OCI-LY7 (cell line): ENCODE measurements at regions of chr14 and their contacts with region 1.

Region 1: DNA sequence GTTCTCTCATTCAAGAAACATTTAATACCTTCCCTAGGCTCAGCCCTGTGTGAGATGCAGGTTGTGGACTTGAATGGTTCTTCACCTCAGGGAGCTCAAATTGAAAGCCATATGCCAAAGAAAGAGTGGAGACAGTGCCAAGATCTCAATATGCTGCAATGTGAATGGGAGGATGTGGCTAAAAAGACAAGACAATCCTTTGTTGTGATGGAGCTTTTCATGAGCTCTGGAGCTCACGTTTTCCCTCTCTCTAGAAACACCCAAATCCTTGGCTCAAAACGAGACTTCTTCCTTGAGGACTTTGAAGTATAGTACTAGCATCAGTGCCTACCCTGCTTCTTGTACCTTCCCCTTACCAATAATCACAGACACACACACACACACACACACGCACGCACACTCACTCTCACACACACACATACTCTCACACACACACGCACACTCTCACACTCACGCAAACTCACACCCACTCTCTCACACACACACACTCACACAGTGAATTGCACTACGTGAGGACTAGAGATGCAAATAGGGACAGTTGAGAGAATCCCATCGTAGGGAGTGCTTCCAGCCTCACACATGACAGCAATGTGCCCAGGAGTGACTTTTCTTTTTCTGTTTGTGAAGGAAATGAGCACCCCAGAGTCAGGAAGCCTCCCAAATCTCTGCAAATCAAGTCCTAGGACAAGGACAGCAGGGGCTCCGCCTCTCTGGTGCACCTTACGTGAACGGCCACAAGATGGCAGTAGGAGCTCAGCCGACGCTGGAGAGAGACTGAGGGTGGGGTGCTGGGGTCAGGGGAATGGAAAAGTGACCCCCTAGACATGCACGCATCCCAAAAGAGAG is 231.4 kb downstream of the PCNX1 start:
- DNase-seq: peak; percentile 77
- H3K4me3 ChIP-seq: no peak overlapping the region
- H3K27ac ChIP-seq: no peak overlapping the region
- H3K4me1 ChIP-seq: peaks cover 31% of the 10 kb centered on the region
- CTCF ChIP-seq: peak; percentile 96

Region 2: GRCh38 chr14:71078500-71078899 is 60.2 kb before region 1 on chr14:
- CTCF ChIA-PET with region 1: no interaction called
- POLR2A ChIA-PET with region 1: no interaction called
- intact Hi-C with region 1: no loop called
- DNase-seq: no peak
- H3K4me3 ChIP-seq: no peak overlapping the region
- H3K27ac ChIP-seq: no peak overlapping the region
- H3K4me1 ChIP-seq: no peaks in the 10 kb centered on the region
- CTCF ChIP-seq: no peak

Region 3: DNA sequence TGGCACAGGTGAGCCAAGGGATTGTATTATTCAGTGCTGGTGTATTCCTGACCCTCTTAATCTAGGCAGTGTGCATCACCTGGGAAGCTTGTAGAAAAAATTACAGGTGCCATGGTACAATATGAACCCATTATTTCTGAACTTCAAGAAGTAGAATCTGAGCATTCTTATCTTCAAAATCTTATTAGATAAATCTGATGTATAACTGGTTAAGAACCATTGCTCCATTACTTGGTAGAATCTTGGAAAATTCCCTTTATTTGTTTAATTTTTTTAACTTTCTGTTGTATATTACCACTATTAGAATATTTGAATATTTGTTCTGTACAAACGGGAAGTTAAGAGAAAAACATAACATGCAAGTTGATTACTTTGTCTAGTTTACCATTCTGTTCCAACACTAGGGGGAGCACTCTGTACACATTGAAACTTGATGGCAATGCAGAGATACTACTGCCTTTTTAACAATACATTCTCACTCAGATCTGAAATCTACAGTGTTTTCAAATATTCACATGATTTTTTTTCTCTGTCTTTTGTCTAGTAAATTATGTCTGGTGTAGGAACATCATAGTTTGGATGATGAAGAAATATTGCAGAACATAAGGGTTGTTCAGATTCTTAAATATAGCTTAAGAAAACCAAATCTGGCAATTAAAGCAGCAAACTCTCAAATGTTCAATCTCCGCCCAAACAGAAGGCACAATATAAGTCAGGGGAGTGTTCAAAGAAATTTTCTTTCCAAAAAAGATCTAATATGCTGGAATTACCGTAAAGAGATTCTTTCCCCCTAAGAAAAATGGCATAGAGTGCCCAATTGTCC is 34.8 kb before region 1 on chr14:
- CTCF ChIA-PET with region 1: no interaction called
- POLR2A ChIA-PET with region 1: no interaction called
- intact Hi-C with region 1: loop called (anchors 1 kb)
- DNase-seq: peak; percentile 80
- H3K4me3 ChIP-seq: no peak overlapping the region
- H3K27ac ChIP-seq: no peak overlapping the region
- H3K4me1 ChIP-seq: no peaks in the 10 kb centered on the region
- CTCF ChIP-seq: peak; percentile 99

Region 4: GRCh38 chr14:71117839-71118743 is 20.6 kb before region 1 on chr14:
- CTCF ChIA-PET with region 1: no interaction called
- POLR2A ChIA-PET with region 1: interaction called, 5 read pairs
- intact Hi-C with region 1: loop called (anchors 2 kb)
- DNase-seq: peak; percentile 24
- H3K4me3 ChIP-seq: no peak overlapping the region
- H3K27ac ChIP-seq: peak overlapping the region; percentile 99
- H3K4me1 ChIP-seq: peaks cover 54% of the 10 kb centered on the region
- CTCF ChIP-seq: no peak

Region 5: GRCh38 chr14:71384007-71384845 is 245.6 kb after region 1 on chr14:
- CTCF ChIA-PET with region 1: no interaction called
- POLR2A ChIA-PET with region 1: no interaction called
- intact Hi-C with region 1: no loop called
- DNase-seq: no peak
- H3K4me3 ChIP-seq: no peak overlapping the region
- H3K27ac ChIP-seq: no peak overlapping the region
- H3K4me1 ChIP-seq: no peaks in the 10 kb centered on the region
- CTCF ChIP-seq: no peak

Region 6: GRCh38 chr14:71403656-71404055 is 265.0 kb after region 1 on chr14:
- CTCF ChIA-PET with region 1: no interaction called
- POLR2A ChIA-PET with region 1: no interaction called
- intact Hi-C with region 1: loop called (anchors 10 kb)
- DNase-seq: peak; percentile 56
- H3K4me3 ChIP-seq: no peak overlapping the region
- H3K27ac ChIP-seq: no peak overlapping the region
- H3K4me1 ChIP-seq: peaks cover 11% of the 10 kb centered on the region
- CTCF ChIP-seq: no peak

Region 7: GRCh38 chr14:71753126-71753830 is 614.6 kb after region 1 on chr14:
- CTCF ChIA-PET with region 1: interaction called, 4 read pairs
- POLR2A ChIA-PET with region 1: no interaction called
- intact Hi-C with region 1: loop called (anchors 1 kb)
- DNase-seq: peak; percentile 81
- H3K4me3 ChIP-seq: no peak overlapping the region
- H3K27ac ChIP-seq: no peak overlapping the region
- H3K4me1 ChIP-seq: peaks cover 8% of the 10 kb centered on the region
- CTCF ChIP-seq: peak; percentile 98

Region 8: GRCh38 chr14:71855399-71856036 is 716.8 kb after region 1 on chr14:
- CTCF ChIA-PET with region 1: no interaction called
- POLR2A ChIA-PET with region 1: no interaction called
- intact Hi-C with region 1: loop called (anchors 2 kb)
- DNase-seq: peak; percentile 70
- H3K4me3 ChIP-seq: peak overlapping the region; percentile 22
- H3K27ac ChIP-seq: peak overlapping the region; percentile 62
- H3K4me1 ChIP-seq: peaks cover 19% of the 10 kb centered on the region
- CTCF ChIP-seq: peak; percentile 97